HAP-1 (cell line): ENCODE measurements at regions of chr18 and their contacts with region 1.

Region 1: DNA sequence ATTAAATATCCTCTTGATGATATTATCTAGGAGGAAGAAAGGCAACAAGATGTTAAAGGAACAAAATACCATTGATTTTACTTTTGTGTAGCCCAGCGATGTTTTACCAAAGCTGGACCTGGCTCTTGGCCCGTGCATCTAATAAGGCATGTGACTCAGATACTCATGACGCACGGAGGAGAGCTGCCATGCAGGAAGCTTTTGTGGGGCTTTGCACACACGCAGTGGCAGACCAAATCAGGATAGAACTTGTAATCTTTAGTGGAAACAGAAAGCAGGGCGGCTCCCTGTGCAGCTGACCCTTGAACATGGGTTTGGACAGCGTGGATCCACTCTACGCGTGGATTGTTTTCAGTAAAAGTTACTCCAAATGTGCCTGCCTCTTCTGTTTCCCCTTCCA is 190.0 kb downstream of the NAPG start:
- DNase-seq: no peak
- H3K4me3 ChIP-seq: no peak overlapping the region
- H3K4me1 ChIP-seq: no peaks in the 10 kb centered on the region
- H3K27me3 ChIP-seq: no peaks in the 10 kb centered on the region

Region 2: DNA sequence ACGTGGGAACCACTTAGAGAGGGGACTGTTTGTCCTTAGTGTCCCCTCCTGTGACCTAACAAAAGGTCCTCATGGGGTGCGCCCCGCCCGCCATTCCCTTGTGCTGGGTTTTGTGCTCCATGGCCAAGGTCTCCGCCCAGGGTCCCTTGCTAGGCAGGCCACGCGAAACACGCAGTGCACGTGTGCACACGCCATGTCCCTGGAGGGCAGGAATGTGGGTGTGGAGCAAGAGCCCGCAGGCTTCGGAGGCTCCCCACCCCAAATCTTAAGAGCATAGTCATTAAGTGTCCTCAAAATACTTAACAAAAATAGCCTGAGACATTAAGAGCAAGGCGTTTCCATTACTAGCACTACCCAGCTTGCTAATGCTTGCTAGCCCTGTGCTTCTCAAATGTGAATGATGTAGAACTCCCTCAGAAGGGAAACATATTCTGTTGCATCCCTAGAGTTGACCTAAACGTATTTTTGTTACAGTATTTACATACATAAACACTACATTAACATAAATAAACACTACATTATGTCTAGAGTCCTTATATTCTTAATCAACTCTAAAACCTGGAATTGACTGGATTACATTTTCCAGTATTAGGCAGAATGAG is 378.9 kb before region 1 on chr18:
- in situ Hi-C with region 1: no loop called
- DNase-seq: no peak
- H3K4me3 ChIP-seq: no peak overlapping the region
- H3K4me1 ChIP-seq: no peaks in the 10 kb centered on the region
- H3K27me3 ChIP-seq: no peaks in the 10 kb centered on the region; the same call in 1 of the 2 replicates

Region 3: DNA sequence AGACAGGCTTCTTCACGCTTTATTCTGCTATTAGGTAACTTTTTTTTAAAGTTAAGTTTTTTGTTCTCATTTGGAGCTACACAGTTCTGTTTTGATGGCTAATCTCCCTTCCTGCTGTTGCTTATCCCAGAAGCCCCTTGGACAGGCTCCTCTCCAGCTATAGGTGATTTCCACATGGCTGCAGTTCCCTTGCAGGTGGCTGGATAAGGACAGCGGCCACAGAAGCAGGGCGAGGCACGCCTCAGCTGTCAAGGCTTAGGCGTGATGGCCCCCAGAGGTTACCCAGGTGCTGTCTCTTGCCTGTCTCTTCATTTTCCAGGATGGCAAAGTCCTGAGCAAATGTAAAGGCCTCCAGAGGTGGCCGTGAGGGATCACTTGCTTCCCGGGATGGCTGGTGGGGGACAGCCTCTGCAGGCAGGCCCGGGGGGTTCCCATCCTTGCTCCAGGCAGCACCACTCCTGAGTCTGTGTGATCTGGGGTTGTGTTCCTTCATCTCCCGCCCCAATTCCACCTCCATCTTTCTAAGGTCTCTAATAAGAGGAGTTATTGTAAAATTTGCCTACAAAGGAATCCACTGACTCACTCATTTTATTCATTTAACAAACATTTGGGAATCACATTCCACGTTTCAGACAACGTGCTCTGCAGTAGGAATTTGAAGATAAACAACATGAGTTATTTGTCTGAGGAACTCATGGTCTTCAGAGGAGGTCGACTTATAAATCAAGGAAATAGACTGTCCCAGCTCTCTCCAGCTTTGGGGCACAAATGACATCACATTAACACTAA is 136.5 kb before region 1 on chr18:
- in situ Hi-C with region 1: loop called (anchors 25 kb)
- DNase-seq: no peak
- H3K4me3 ChIP-seq: no peak overlapping the region
- H3K4me1 ChIP-seq: no peaks in the 10 kb centered on the region
- H3K27me3 ChIP-seq: no peaks in the 10 kb centered on the region

Region 4: GRCh38 chr18:11020877-11021414 is 305.2 kb after region 1 on chr18:
- in situ Hi-C with region 1: no loop called
- DNase-seq: no peak
- H3K4me3 ChIP-seq: no peak overlapping the region
- H3K4me1 ChIP-seq: no peaks in the 10 kb centered on the region
- H3K27me3 ChIP-seq: no peaks in the 10 kb centered on the region

Region 5: DNA sequence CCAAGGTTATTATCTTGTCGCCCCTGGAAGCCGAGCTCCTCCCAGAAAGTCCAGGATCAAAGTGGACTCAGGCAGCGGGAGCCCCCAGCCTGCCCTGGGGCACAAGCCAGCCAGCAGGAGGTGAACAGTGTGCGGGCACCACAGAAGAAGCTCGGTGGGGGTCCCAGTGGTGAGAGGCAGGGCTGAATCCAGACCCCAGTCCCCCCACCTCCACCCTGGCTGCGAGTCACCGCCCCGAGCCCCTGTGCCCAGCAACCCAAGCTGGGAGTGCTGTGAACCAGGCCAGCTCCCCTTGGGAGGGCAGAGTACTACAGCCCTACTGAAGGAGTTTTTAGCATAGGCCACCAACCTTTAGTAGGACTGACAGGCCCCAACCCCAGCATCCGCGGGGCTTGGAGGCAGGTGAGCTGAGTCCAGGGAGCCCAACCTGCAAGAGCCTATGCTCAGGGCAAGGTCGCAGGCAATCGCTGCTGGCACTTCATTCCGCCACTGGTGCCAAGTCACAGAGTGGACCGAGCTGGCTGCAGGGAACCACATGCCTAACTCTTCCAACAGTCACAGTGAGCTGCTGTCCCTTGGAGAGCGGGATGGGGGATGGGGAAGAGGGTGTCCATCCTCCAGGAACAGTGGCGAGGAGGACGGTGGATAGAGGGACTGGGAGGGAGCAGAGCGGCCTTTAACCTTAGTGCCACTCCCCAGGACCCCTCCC is 430.6 kb after region 1 on chr18:
- in situ Hi-C with region 1: no loop called
- DNase-seq: no peak
- H3K4me3 ChIP-seq: no peak overlapping the region
- H3K4me1 ChIP-seq: no peaks in the 10 kb centered on the region
- H3K27me3 ChIP-seq: no peaks in the 10 kb centered on the region